ENCODE measurements at regions of chr7 and their contacts with region 1.

Region 1: GRCh38 chr7:47179812-47180515 is 401.9 kb downstream of the TNS3 start:
- DNase-seq: peak; percentile 30
- ATAC-seq: peak; percentile 69 to 72

Region 2: GRCh38 chr7:45917658-45918057 is 1262.3 kb before region 1 on chr7:
- intact Hi-C with region 1: loop called (anchors 1 to 5 kb)
- DNase-seq: peak; percentile 84
- ATAC-seq: peak; percentile 54 to 56

Region 3: DNA sequence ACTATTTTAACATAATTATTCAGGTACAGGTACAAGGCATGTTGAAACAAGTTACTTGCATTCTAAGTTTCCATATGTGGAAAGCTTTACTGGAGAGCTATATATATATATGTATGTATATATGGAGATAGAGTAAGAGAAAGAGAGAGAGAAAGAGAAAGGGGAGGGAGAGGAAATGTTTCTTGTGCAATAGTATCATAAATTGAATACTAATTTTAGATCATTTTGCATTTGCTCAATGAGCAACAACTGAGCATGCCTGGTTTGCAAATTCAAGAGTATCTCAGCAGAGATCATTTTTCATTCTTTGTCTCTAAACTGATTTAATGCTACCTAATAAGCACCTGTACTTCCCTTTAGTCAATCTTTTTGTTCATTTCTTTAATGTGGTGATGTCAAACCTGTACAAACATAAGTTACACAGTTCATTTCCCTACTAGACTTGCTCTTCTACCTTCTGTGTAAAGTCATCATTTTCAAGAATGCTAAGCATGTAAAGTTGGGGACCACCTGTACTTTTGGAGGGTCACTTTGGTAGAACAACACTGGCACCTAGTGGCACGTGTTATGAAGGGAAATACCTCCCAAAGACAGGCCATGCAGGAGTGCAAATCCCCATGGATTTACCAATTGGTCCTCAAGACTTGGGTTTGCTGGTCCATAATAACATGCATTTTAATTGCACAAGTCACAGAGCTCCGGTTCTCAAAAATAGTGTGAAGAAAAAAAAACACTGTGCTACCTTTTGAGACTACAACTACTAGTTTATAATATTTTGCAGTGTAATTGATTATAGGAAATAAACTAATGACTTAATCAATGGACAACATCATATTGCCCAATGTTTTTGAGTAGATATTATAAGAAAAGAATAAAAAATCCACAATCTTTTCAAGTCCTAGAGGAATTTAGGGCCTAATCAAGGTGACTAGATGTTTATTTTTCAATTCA is 827.7 kb before region 1 on chr7:
- intact Hi-C with region 1: loop called in 1 of 2 experiments (anchors 10 kb)
- DNase-seq: peak; percentile 28
- ATAC-seq: peak; percentile 50 to 57

Region 4: DNA sequence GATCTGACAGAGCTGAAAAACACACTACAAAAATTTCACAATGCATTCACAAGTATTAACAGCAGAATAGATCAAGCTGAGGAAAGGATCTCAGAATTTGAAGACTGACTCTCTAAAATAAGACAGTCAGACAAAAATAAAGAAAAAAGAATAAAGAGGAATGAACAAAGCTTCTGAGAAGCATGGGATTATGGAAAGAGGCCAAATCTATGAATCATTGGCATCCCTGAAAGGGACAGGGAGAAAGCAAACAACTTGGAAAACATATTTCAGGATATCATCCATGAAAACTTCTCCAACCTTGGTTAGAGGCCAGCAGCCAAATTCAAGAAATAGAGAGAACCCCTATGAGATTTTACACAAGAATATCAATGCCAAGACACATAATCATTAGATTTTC is 454.1 kb before region 1 on chr7:
- intact Hi-C with region 1: no loop called
- DNase-seq: no peak
- ATAC-seq: no peak

Region 5: GRCh38 chr7:47247132-47247531 is 67.2 kb after region 1 on chr7:
- intact Hi-C with region 1: loop called in 1 of 2 experiments (anchors 5 kb)
- DNase-seq: no peak
- ATAC-seq: peak in 1 of 2 donors; percentile 25

Measured in left cardiac atrium (tissue), 4 donors.